ENCODE measurements at regions of chr2 and their contacts with region 1.

Region 1: GRCh38 chr2:235106874-235107639 is 155.2 kb downstream of the SH3BP4 start:
- DNase-seq: peak; percentile 88
- H3K4me3 ChIP-seq: no peak overlapping the region
- H3K27ac ChIP-seq: no peak overlapping the region
- H3K4me1 ChIP-seq: peaks cover 0 to 4% (median 2%) of the 10 kb centered on the region in 4 donors
- H3K27me3 ChIP-seq: no peaks in the 10 kb centered on the region
- CTCF ChIP-seq: peak; percentile 58 to 72 (median 68)
- EP300 ChIP-seq: no peak
- POLR2A ChIP-seq: no peak

Region 2: DNA sequence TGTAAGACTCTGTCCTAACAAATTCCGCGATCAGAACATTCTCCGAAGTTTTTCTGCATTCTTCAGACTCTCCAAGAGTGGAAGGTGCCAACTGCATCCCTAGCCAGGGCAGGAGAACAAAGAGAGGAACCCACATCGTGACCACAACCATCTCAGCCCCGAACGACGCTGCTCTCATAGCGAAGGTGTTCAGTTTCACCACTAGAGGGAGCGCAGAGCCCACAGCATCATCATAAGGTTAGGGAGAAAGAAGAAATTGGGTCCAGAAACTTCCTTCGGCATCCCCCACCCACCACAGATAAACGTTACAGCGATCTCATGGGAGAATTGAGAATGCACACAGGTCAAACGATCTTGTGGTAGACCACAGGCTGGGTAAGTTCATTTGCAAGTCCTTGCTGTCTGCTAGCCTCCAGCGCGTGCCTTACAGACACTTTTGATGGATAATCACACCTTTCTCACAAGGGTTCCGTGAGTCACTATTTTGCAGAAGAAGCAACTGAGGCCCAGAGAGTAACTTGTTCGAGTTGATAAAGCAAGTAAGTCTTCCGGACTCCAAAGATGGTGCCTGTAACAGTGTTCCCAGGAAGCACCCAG is 556.4 kb before region 1 on chr2:
- intact Hi-C with region 1: loop called (anchors 5 kb)
- DNase-seq: no peak
- H3K4me3 ChIP-seq: no peak overlapping the region
- H3K27ac ChIP-seq: no peak overlapping the region
- H3K4me1 ChIP-seq: peaks cover 0 to 10% (median 5%) of the 10 kb centered on the region in 4 donors
- H3K27me3 ChIP-seq: peaks cover 0 to 21% (median 0%) of the 10 kb centered on the region in 4 donors
- CTCF ChIP-seq: peak; percentile 91 to 92 (median 92)
- EP300 ChIP-seq: no peak
- POLR2A ChIP-seq: no peak

Region 3: DNA sequence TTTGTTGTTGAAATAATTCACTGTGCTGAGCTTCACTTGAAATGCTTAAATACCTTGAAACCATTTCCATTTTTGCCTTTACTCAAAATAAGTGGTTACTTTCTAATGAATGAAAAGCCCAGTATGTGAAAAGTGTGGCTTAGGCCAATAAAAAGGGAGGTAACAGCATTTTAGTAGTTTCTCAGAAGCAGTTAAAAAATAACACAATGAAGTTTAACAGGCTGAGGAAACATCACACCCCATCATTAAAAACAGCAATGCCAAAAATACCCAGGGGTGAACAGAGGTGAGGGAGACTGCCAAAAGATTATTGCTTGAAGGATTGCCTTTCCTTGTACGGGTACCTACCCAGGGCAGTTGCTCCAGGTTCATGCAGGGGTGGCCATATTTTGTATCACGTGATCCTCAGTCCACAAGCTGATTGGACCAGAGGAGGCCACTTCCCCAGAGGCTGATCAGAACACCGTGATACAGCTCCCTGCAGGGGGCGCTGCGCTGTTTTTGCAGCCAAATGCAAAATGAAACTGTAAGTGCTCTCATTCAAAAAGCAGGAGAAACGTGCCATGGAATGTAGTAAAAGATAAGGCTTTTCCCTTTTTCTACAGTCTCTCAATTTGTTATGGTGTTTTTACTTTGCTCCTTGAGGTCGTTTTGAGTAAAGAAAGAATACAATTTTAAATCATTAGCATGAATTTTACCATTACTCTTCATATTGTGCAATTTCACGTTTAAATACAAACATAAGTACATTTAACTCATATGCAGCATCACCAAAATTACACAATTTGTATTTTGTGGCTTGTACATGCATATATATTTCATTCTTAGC is 225.4 kb before region 1 on chr2:
- intact Hi-C with region 1: loop called (anchors 5 kb)
- DNase-seq: no peak
- H3K4me3 ChIP-seq: peak overlapping the region in 2 of 4 donors; percentile 27
- H3K27ac ChIP-seq: peak overlapping the region in 3 of 4 donors; percentile 34 to 43 (median 35)
- H3K4me1 ChIP-seq: peaks cover 9 to 20% (median 18%) of the 10 kb centered on the region in 4 donors
- H3K27me3 ChIP-seq: no peaks in the 10 kb centered on the region
- CTCF ChIP-seq: peak; percentile 71 to 72 (median 72)
- EP300 ChIP-seq: no peak
- POLR2A ChIP-seq: no peak

Region 4: DNA sequence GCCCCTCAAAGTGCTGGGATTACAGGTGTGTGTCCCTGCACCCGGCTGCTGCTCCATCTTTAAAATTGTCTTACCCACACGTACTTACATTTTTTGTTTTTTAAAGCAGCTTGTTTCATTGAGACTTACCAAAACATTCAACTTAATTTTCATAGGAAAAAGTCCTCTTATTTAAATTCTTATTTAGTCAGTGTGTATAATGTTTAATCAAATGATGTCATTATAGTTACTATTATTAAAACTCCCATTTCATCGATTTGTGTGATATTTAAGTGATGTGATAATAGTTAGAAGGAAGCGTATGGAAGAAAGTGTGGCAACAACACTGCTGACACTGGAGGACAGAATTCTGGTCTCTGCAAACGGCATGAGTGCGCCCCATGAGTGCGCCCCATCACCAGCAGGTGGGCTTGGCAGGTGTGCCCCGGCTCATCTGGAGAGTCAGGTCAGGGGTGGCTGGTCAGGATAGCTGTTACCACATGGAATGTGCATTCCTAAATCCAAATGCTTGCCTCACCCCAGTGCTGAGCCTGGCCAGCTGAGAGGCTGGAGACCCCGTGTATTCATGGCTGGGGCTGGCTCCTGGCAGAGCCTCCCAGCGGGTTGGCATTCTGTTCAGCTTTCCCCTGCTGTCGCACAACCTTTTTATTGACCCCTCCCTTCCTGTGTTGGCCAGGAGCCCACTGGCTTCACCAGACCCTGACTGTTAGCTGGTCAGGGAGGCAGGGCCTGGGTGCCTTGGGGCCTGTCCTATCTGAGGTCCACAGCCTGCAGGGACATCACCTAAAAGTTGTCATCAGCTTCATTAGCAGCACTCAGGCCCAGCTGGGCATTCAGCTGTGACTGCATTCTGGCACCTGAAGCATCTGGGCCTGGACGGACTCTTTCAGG is 466.5 kb after region 1 on chr2:
- intact Hi-C with region 1: no loop called
- DNase-seq: no peak
- H3K4me3 ChIP-seq: no peak overlapping the region
- H3K27ac ChIP-seq: no peak overlapping the region
- H3K4me1 ChIP-seq: peaks cover 10 to 30% (median 20%) of the 10 kb centered on the region in 4 donors
- H3K27me3 ChIP-seq: no peaks in the 10 kb centered on the region
- CTCF ChIP-seq: no peak
- EP300 ChIP-seq: no peak
- POLR2A ChIP-seq: no peak

Region 5: DNA sequence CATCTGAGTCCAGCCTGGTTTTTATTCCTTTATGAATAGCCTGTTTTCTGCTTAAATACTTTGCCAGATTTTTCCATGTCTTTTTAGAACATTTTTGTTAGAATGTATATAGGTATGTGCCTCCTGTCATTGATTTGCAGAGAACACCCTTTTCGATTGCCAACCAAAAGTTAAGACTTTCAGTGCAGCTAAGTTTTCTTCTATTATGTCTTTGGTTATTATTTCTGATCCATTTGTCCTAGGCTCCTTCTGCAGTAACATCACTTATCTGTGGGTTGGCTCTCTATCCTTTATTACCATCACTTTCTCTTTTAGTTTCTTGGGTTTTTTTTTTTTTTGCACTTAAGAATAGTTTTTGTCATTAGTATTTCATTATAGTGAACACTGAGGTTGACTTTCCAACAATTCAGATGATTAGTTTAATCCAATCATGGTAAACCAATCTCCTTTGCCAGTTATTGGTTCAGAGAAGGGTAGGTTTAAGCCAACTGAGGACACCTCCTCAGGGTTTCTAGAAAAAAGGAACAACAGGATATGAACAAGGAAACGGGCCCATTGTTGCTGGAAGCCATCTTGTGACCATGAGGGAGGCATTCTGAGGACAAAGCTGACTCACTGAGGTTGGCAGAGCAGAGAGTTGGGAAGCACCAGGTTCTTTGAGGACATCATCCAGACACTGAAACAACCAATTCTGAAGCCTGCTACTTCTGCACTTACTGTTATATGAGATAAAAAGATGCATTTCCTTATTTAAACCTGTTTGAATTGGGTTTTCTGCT is 1099.0 kb after region 1 on chr2:
- intact Hi-C with region 1: no loop called
- DNase-seq: no peak
- H3K4me3 ChIP-seq: no peak overlapping the region
- H3K27ac ChIP-seq: no peak overlapping the region
- H3K4me1 ChIP-seq: no peaks in the 10 kb centered on the region
- H3K27me3 ChIP-seq: peaks cover 0 to 46% (median 0%) of the 10 kb centered on the region in 4 donors
- CTCF ChIP-seq: no peak
- EP300 ChIP-seq: no peak
- POLR2A ChIP-seq: no peak

Measured in esophagus muscularis mucosa (tissue), 4 donors.